ENCODE measurements at regions of chr7 and their contacts with region 1.

Region 1: DNA sequence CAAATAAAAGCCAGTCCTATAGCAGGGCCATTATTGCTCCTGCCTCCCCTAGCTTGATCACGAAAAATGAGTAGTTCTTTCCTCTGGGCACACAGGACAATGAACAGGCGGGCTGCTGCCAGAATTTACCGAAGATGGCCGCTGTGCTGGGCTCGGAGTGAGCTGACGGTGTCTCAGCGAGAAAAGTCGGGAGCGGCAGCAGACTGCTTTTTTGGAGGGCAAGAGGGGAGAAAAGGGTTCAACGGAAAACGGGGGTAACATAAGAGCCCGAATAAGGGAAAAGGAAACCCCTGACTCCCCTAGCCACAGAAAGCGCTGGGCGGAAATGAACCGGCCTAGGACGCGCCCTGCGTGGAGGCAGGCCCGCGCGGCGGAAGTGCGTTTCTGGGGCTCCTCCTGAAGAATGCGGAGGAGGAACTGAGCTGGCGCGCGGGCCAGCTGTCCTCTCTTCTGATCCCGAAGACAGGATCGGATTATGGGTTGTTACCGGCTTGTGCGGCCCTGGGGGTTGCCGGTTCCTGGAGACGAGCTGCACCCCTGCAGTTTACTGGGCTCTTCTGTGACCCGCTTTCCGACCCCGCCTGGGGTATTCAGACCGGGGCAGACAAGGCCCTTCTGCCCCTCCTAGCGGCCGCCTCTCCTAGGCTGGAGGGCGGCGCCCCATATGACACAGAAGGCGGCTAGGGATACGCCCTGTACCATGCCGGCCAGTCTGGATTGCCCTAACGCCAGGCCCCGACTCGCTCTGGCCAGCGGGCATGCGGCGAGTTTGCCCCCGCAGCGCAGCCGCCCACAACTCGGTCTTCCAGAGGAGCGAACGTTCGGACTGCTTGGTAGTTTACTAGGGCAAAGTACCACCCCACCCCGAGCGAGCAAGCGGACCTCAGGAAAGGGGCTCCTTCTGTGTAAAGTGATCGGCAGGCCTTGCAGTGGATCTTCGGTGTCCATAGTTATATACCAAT is 30.1 kb upstream of the KMT2E start:
- DNase-seq: peak; percentile 78 to 86 (median 84)
- ATAC-seq: peak; percentile 94
- H3K4me3 ChIP-seq: peak overlapping the region; percentile 93
- H3K4me3 Mint-ChIP-seq: peak overlapping the region; percentile 93 to 100 (median 99)
- H3K27ac ChIP-seq: peak overlapping the region; percentile 98
- H3K27ac Mint-ChIP-seq: peak overlapping the region; percentile 98 to 100 (median 100)
- H3K4me1 ChIP-seq: peaks cover 19 to 23% of the 10 kb centered on the region in 2 donors
- H3K4me1 Mint-ChIP-seq: peaks cover 27 to 67% (median 55%) of the 10 kb centered on the region in 7 donors
- H3K27me3 ChIP-seq: no peaks in the 10 kb centered on the region
- H3K27me3 Mint-ChIP-seq: no peaks in the 10 kb centered on the region

Region 2: GRCh38 chr7:104883718-104884452 is 100.0 kb before region 1 on chr7:
- CTCF ChIA-PET with region 1: no interaction called
- POLR2A ChIA-PET with region 1: no interaction called
- intact Hi-C with region 1: loop called in 1 of 2 experiments (anchors 5 kb)
- DNase-seq: peak; percentile 43 to 79 (median 58)
- ATAC-seq: peak; percentile 92
- H3K4me3 ChIP-seq: no peak overlapping the region
- H3K4me3 Mint-ChIP-seq: peak overlapping the region in 4 of 10 donors; percentile 3 to 56 (median 34)
- H3K27ac ChIP-seq: no peak overlapping the region
- H3K27ac Mint-ChIP-seq: peak overlapping the region in 2 of 9 donors; percentile 12 to 39
- H3K4me1 ChIP-seq: no peaks in the 10 kb centered on the region
- H3K4me1 Mint-ChIP-seq: peaks cover 0 to 18% (median 5%) of the 10 kb centered on the region in 7 donors
- H3K27me3 ChIP-seq: no peaks in the 10 kb centered on the region
- H3K27me3 Mint-ChIP-seq: peaks cover 0 to 11% (median 0%) of the 10 kb centered on the region in 5 donors

Region 3: DNA sequence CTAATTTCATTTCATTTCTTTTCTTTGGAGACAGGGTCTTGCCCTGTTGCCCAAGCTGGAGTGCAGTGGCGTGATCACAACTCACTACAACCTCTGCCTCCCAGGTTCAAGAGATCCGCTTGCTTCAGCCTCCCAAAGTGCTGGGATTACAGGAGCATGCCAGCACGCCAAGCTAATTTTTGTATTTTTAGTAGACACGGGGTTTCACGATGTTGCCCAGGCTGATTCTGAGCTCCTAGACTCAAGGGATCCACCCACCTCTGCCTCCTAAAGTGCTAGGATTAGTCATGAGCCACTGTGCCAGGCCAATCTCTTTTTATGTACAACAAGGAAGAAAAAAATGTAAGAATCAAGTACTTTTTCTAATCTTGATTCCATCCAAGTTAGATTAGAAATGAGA is 19.4 kb after region 1 on chr7:
- CTCF ChIA-PET with region 1: interaction called, 21 read pairs
- POLR2A ChIA-PET with region 1: interaction called, 639 read pairs
- intact Hi-C with region 1: loop called (anchors 1 to 2 kb)
- DNase-seq: peak in 1 of 9 donors; percentile 50
- ATAC-seq: peak; percentile 52
- H3K4me3 ChIP-seq: peak overlapping the region; percentile 27
- H3K4me3 Mint-ChIP-seq: peak overlapping the region; percentile 61 to 80 (median 65)
- H3K27ac ChIP-seq: peak overlapping the region; percentile 57
- H3K27ac Mint-ChIP-seq: peak overlapping the region; percentile 47 to 92 (median 78)
- H3K4me1 ChIP-seq: peaks cover 66 to 76% of the 10 kb centered on the region in 2 donors
- H3K4me1 Mint-ChIP-seq: peaks cover 66 to 96% (median 90%) of the 10 kb centered on the region in 7 donors
- H3K27me3 ChIP-seq: no peaks in the 10 kb centered on the region
- H3K27me3 Mint-ChIP-seq: no peaks in the 10 kb centered on the region

Region 4: DNA sequence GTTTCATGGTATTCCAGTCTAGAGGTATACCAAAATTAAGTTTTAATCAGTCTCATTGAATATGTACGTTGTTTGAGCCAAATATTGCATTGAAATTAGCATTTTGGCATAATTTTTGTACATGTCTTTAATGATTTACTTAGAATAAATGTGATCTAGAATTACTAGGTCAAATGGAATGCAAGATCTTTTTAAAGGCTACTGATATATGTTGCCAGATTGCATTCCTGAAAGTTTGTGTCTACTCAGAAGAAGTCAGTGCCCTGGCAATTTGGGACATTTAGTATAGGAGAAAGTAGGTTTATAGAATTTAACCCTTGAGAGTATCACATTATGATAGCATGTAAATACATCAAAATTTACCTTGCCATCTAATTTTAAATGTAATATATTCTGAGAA is 62.6 kb after region 1 on chr7:
- CTCF ChIA-PET with region 1: interaction called, 76 read pairs
- POLR2A ChIA-PET with region 1: interaction called, 13 read pairs
- intact Hi-C with region 1: loop called (anchors 1 kb)
- DNase-seq: no peak
- ATAC-seq: no peak
- H3K4me3 ChIP-seq: no peak overlapping the region
- H3K4me3 Mint-ChIP-seq: peak overlapping the region in 1 of 10 donors; percentile 44
- H3K27ac ChIP-seq: no peak overlapping the region
- H3K27ac Mint-ChIP-seq: peak overlapping the region in 6 of 9 donors; percentile 6 to 71 (median 42)
- H3K4me1 ChIP-seq: peaks cover 9 to 10% of the 10 kb centered on the region in 2 donors
- H3K4me1 Mint-ChIP-seq: peaks cover 32 to 76% (median 59%) of the 10 kb centered on the region in 7 donors
- H3K27me3 ChIP-seq: no peaks in the 10 kb centered on the region
- H3K27me3 Mint-ChIP-seq: no peaks in the 10 kb centered on the region

Region 5: GRCh38 chr7:105118612-105119600 is 135.0 kb after region 1 on chr7:
- CTCF ChIA-PET with region 1: interaction called, 3 read pairs
- POLR2A ChIA-PET with region 1: interaction called, 4 read pairs
- intact Hi-C with region 1: loop called in 1 of 2 experiments (anchors 2 kb)
- DNase-seq: no peak
- ATAC-seq: no peak
- H3K4me3 ChIP-seq: no peak overlapping the region
- H3K4me3 Mint-ChIP-seq: peak overlapping the region in 4 of 10 donors; percentile 23 to 39 (median 34)
- H3K27ac ChIP-seq: peak overlapping the region; percentile 40
- H3K27ac Mint-ChIP-seq: peak overlapping the region; percentile 53 to 90 (median 86)
- H3K4me1 ChIP-seq: no peaks in the 10 kb centered on the region
- H3K4me1 Mint-ChIP-seq: peaks cover 5 to 51% (median 32%) of the 10 kb centered on the region in 7 donors
- H3K27me3 ChIP-seq: no peaks in the 10 kb centered on the region
- H3K27me3 Mint-ChIP-seq: no peaks in the 10 kb centered on the region

Region 6: GRCh38 chr7:105388373-105389087 is 404.7 kb after region 1 on chr7 and contains the start of gene SRPK2:
- CTCF ChIA-PET with region 1: no interaction called
- POLR2A ChIA-PET with region 1: interaction called, 3 read pairs
- intact Hi-C with region 1: loop called (anchors 1 to 5 kb)
- DNase-seq: peak; percentile 61 to 79 (median 73)
- ATAC-seq: peak; percentile 86
- H3K4me3 ChIP-seq: peak within 1 kb of the TSS; percentile 77
- H3K4me3 Mint-ChIP-seq: peak within 1 kb of the TSS; percentile 91 to 100 (median 98)
- H3K27ac ChIP-seq: peak within 1 kb of the TSS; percentile 82
- H3K27ac Mint-ChIP-seq: peak within 1 kb of the TSS; percentile 90 to 99 (median 95)
- H3K4me1 ChIP-seq: peaks cover 5 to 12% of the 10 kb centered on the region in 2 donors
- H3K4me1 Mint-ChIP-seq: peaks cover 19 to 46% (median 40%) of the 10 kb centered on the region in 7 donors
- H3K27me3 ChIP-seq: no peaks in the 10 kb centered on the region
- H3K27me3 Mint-ChIP-seq: peaks cover 0 to 2% (median 0%) of the 10 kb centered on the region in 5 donors
- total RNA-seq, gene SRPK2: 45.1 to 56.7 (median 46.8) TPM

Region 7: GRCh38 chr7:105589356-105590077 is 605.7 kb after region 1 on chr7:
- CTCF ChIA-PET with region 1: no interaction called
- POLR2A ChIA-PET with region 1: no interaction called
- intact Hi-C with region 1: loop called (anchors 1 kb)
- DNase-seq: peak in 8 of 9 donors; percentile 16 to 61 (median 42)
- ATAC-seq: peak; percentile 87
- H3K4me3 ChIP-seq: no peak overlapping the region
- H3K4me3 Mint-ChIP-seq: no peak overlapping the region
- H3K27ac ChIP-seq: no peak overlapping the region
- H3K27ac Mint-ChIP-seq: peak overlapping the region in 3 of 9 donors; percentile 4 to 70 (median 69)
- H3K4me1 ChIP-seq: no peaks in the 10 kb centered on the region
- H3K4me1 Mint-ChIP-seq: peaks cover 0 to 17% (median 4%) of the 10 kb centered on the region in 7 donors
- H3K27me3 ChIP-seq: no peaks in the 10 kb centered on the region
- H3K27me3 Mint-ChIP-seq: peaks cover 0 to 9% (median 0%) of the 10 kb centered on the region in 5 donors

Measured in naive thymus-derived CD4-positive, alpha-beta T cell (primary cell).